ENCODE measurements at regions of chr10 and their contacts with region 1.

Region 1: GRCh38 chr10:11178606-11179515 is 161.2 kb downstream of the CELF2 start:
- DNase-seq: peak; percentile 76
- CTCF ChIP-seq: no peak

Region 2: DNA sequence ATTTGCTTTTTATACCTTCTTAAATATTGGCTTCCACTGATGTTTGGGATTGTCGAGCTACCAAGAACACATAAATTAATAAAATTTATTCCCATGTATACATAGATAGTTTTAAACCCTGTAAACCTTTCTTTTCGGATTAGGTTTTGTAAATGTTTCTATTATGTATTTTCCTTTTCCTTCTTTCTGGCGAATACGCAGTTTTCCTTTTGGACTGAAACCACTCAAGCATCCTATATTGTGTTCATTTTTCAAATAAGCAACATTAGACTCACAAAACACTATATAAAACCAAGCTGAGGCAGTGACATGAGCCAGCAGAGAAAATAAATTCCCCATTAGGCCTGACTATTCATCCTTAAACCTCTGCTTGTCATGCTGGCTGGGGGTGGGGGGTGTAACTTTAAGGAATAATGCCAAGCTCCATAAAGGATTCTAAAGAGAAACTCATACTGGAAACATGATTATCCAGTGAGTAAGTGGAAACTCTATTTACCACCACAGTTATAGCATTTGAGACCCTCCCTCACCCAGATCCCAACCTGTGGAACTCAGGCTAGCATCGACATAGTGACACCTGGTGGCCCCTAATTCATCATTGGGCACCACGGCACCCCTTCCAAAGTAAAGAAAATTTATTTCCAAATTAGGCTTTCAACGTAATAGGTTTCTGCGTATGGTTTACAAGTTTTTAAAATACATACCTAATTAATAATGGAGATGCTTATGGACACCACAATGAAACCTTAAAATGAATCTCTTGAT is 247.7 kb before region 1 on chr10:
- in situ Hi-C with region 1: no loop called
- DNase-seq: no peak
- CTCF ChIP-seq: no peak

Region 3: GRCh38 chr10:11260170-11260569 is 81.3 kb after region 1 on chr10:
- in situ Hi-C with region 1: loop called (anchors 10 kb)
- DNase-seq: no peak
- CTCF ChIP-seq: no peak